CD8-positive, alpha-beta T cell (primary cell): ENCODE measurements at regions of chr6 and their contacts with region 1.

Region 1: DNA sequence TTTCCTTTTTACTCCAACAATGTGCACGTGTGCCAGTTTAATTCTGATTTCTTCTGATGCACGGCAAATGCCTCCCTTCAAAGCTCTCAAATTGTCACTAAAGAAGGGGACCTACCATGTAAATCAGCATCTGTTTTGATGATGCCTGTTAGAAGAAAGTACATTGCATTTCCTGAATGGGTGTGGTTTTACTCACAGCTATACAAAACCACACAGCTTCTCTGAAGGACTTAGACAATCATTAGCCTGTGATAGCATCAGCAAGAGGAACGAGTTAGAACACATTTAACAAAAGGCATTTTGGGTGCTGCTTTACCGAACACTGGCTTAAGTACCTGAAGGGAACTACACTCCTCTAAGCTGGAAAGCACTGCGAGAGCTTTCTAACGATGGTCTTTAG is 109.4 kb downstream of the ATXN1 start:
- DNase-seq: peak in 2 of 9 experiments; percentile 60 to 77
- ATAC-seq: peak; percentile 79
- H3K4me3 ChIP-seq: no peak overlapping the region
- H3K4me3 Mint-ChIP-seq: peak overlapping the region; percentile 15
- H3K27ac ChIP-seq: peak overlapping the region in 1 of 2 experiments; percentile 38
- H3K27ac Mint-ChIP-seq: peak overlapping the region; percentile 80
- H3K4me1 ChIP-seq: peaks cover 14% of the 10 kb centered on the region
- H3K4me1 Mint-ChIP-seq: peaks cover 43% of the 10 kb centered on the region
- H3K27me3 ChIP-seq: no peaks in the 10 kb centered on the region
- H3K27me3 Mint-ChIP-seq: no peaks in the 10 kb centered on the region
- CTCF ChIP-seq: no peak

Region 2: DNA sequence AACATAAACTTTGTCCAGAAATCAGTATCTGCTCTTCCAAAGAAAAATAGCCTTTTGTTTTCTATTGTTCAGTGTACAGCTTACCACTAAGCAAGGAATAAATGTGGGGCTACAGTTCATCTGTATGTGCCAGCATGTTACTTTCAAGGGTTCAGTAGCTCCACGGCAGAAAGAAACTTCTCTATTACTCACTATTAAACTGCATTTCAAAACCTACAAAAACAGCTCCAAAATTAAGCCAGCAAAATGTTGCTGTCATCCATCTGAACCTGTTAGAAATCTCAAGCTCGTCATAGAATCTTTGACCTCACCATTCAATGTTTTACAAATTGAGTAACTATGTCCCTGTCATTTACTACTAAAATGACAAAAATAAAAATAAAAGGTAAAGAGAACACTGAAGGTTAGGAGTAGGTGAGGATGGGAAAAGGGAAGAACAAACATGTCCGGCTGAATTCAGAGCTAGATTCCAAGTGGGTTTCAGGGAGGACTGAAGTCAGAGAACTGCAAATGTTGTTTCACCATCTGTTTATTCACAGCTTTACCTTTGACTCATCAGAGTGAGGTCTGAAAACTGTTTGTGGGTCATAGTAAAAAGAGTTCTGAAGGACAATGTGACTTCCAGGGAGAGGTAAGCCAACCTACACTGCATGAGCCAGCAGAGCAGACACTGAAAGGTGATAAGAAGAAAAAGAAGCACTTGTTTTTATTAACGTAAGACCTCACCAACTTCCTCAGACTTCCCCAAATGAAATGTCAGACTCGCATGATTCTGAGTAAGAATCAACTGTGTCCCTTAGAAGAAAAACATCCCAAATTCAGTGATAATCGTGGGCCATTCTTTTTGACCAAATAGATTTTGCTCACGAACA is 47.4 kb after region 1 on chr6:
- CTCF ChIA-PET with region 1: no interaction called
- POLR2A ChIA-PET with region 1: no interaction called
- intact Hi-C with region 1: loop called in 1 of 2 experiments (anchors 5 kb)
- DNase-seq: peak in 4 of 9 experiments; percentile 20 to 77 (median 46)
- ATAC-seq: peak; percentile 71
- H3K4me3 ChIP-seq: peak overlapping the region in 1 of 2 experiments; percentile 61
- H3K4me3 Mint-ChIP-seq: peak overlapping the region; percentile 80
- H3K27ac ChIP-seq: peak overlapping the region; percentile 48 to 87
- H3K27ac Mint-ChIP-seq: peak overlapping the region; percentile 92
- H3K4me1 ChIP-seq: peaks cover 16% of the 10 kb centered on the region
- H3K4me1 Mint-ChIP-seq: peaks cover 67% of the 10 kb centered on the region
- H3K27me3 ChIP-seq: no peaks in the 10 kb centered on the region
- H3K27me3 Mint-ChIP-seq: no peaks in the 10 kb centered on the region
- CTCF ChIP-seq: no peak

Region 3: DNA sequence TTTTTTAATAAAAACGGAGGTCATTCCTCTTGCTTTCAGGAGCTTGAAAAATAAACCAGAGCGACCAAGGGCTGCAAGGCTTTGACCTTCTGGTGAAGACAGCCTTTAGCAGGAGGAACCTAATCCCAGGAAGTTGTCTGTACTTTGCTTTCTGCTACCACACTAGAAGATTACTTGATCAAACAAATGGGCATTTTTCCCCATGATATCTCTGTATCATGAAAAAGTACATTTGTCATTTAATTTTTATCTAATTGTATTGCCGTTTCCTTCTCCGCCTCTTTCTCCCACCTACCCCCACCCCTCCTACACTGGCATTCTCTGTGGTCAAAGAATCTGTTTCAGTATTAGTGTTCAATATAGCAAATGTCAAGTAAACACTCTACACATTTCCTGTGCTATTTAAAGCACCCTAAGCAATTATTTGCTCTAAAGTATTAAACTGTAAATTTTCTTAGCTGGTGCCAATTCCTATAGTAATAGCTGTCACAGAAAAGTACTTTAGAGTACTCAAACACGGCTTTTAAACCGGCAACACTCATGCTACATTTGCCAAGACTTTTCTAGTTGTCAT is 79.7 kb after region 1 on chr6:
- CTCF ChIA-PET with region 1: no interaction called
- POLR2A ChIA-PET with region 1: no interaction called
- intact Hi-C with region 1: loop called in 1 of 2 experiments (anchors 5 kb)
- DNase-seq: peak in 3 of 9 experiments; percentile 32 to 74 (median 43)
- ATAC-seq: peak; percentile 64
- H3K4me3 ChIP-seq: peak overlapping the region in 1 of 2 experiments; percentile 39
- H3K4me3 Mint-ChIP-seq: peak overlapping the region; percentile 64
- H3K27ac ChIP-seq: peak overlapping the region in 1 of 2 experiments; percentile 77
- H3K27ac Mint-ChIP-seq: peak overlapping the region; percentile 82
- H3K4me1 ChIP-seq: no peaks in the 10 kb centered on the region
- H3K4me1 Mint-ChIP-seq: peaks cover 45% of the 10 kb centered on the region
- H3K27me3 ChIP-seq: no peaks in the 10 kb centered on the region
- H3K27me3 Mint-ChIP-seq: no peaks in the 10 kb centered on the region
- CTCF ChIP-seq: no peak